Naive thymus-derived CD4-positive, alpha-beta T cell (primary cell): ENCODE measurements at regions of chr5 and their contacts with region 1.

Region 1: GRCh38 chr5:147223948-147224791 is 10.7 kb upstream of the STK32A start:
- DNase-seq: no peak
- ATAC-seq: no peak
- H3K4me3 ChIP-seq: no peak overlapping the region
- H3K4me3 Mint-ChIP-seq: no peak overlapping the region
- H3K27ac ChIP-seq: no peak overlapping the region
- H3K27ac Mint-ChIP-seq: no peak overlapping the region
- H3K4me1 ChIP-seq: no peaks in the 10 kb centered on the region
- H3K4me1 Mint-ChIP-seq: peaks cover 0 to 12% (median 4%) of the 10 kb centered on the region in 7 donors
- H3K27me3 ChIP-seq: no peaks in the 10 kb centered on the region
- H3K27me3 Mint-ChIP-seq: peaks cover 0 to 12% (median under 1%) of the 10 kb centered on the region in 5 donors

Region 2: DNA sequence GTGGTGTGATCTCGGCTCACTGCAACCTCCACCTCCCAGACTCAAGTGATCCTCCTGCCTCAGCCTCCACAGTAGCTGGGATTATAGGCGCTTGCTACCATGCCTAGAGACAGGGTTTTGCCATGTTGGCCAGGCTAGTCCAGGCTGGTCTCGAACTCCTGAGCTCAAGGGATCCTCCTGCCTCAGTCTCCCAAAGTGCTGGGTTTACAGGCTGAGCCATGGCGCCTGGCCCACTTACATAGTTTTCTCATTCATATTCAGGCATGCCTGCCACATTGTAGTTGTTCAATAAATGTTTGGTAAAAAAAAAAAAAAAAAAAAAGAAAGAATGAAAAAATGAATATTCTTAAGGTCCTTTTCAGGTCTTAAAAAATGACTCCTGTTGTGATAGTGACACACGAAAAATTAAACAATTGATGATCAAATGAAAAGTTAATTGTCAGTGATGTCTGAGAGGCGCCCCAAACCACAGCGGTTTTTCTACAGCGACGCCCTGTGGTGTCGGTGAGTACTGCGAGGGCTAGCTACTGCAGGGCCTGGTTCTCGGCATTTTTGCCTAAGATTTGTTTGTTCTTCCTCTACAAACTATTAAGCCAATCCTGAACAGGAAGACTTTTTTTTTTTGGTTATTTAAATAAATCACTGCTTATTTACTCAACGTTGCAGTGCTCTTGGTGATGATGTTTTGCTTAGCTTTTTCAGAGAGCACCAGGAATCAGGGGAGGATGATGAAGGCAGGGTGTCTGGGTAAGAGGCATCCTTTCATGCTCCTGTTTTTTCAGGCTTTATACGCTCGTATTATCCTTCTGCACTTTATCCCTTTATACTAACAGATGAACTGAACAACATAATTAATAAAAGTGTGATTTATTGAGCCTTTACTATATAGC is 352.7 kb after region 1 on chr5:
- CTCF ChIA-PET with region 1: no interaction called
- POLR2A ChIA-PET with region 1: no interaction called
- intact Hi-C with region 1: loop called in 1 of 2 experiments (anchors 5 kb)
- DNase-seq: peak in 1 of 9 donors; percentile 54
- ATAC-seq: peak; percentile 42
- H3K4me3 ChIP-seq: no peak overlapping the region
- H3K4me3 Mint-ChIP-seq: no peak overlapping the region
- H3K27ac ChIP-seq: no peak overlapping the region
- H3K27ac Mint-ChIP-seq: no peak overlapping the region
- H3K4me1 ChIP-seq: no peaks in the 10 kb centered on the region
- H3K4me1 Mint-ChIP-seq: no peaks in the 10 kb centered on the region
- H3K27me3 ChIP-seq: no peaks in the 10 kb centered on the region
- H3K27me3 Mint-ChIP-seq: peaks cover 0 to 6% (median 5%) of the 10 kb centered on the region in 5 donors